Dorsolateral prefrontal cortex (tissue), 120 donors: ENCODE measurements at regions of chr7 and their contacts with region 1.

Region 1: DNA sequence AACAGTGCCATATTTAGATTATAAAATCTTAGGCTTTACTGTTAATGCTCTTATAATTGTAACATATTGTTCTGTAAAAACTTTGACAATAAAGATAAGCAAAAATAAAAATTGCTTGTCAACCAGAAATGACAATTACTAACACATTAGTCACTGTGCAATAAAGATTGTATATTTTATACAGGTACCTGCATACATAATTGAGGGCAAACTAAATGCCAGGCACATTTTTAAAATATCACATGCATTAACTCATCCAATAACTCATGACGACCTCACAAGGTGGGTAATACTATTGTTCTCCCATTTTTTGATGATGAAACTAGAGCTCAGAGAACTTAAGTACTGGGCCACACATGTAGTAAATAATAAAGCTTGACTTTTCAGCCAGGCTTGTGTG is 1020.2 kb upstream of the C7orf33 start:
- DNase-seq: no peak
- H3K4me3 ChIP-seq: no peak overlapping the region
- H3K27ac ChIP-seq: peak overlapping the region in 8 of 59 donors; percentile 51 to 93 (median 85)
- H3K27me3 ChIP-seq: no peaks in the 10 kb centered on the region
- CTCF ChIP-seq: no peak

Region 2: DNA sequence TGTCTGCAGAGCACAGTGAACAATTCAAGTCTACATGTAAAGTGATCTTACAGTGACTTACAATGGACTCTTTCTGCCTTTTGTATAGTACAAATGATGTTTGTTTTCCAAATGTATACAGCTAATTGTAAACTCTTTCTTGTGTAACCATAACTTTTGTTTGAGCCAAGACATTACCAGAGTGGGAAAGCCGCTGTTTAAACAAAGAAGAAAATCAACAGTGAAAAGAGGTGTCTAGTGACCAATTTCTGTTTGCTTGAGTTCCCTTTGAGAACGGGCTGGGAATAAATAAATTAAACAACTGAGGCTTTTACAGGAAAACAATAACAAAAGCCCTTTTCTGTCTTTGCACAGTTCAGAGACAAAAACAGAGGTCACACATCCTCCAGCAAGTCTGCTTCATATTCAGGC is 290.4 kb before region 1 on chr7:
- intact Hi-C with region 1: loop called in 1 of 2 experiments (anchors 5 kb)
- DNase-seq: no peak
- H3K4me3 ChIP-seq: peak overlapping the region in 48 of 59 donors; percentile 1 to 57 (median 27)
- H3K27ac ChIP-seq: peak overlapping the region in 58 of 59 donors; percentile 8 to 89 (median 81)
- H3K27me3 ChIP-seq: no peaks in the 10 kb centered on the region
- CTCF ChIP-seq: peak in 3 of 56 donors; percentile 4 to 13 (median 8)

Region 3: GRCh38 chr7:147639037-147639436 is 68.6 kb after region 1 on chr7:
- intact Hi-C with region 1: no loop called
- DNase-seq: peak in 6 of 10 donors; percentile 14 to 60 (median 50)
- H3K4me3 ChIP-seq: peak overlapping the region in 56 of 59 donors; percentile 17 to 70 (median 40)
- H3K27ac ChIP-seq: peak overlapping the region in 49 of 59 donors; percentile 7 to 85 (median 66)
- H3K27me3 ChIP-seq: no peaks in the 10 kb centered on the region
- CTCF ChIP-seq: peak in 17 of 56 donors; percentile 10 to 37 (median 23)

Region 4: GRCh38 chr7:147765301-147765700 is 194.9 kb after region 1 on chr7:
- intact Hi-C with region 1: loop called in 1 of 2 experiments (anchors 10 kb)
- DNase-seq: no peak
- H3K4me3 ChIP-seq: no peak overlapping the region
- H3K27ac ChIP-seq: peak overlapping the region in 1 of 59 donors; percentile 12
- H3K27me3 ChIP-seq: no peaks in the 10 kb centered on the region
- CTCF ChIP-seq: no peak